Activated CD4-positive, alpha-beta memory T cell treated with anti-CD3 and anti-CD28 coated beads for 36 hours (primary cell): ENCODE measurements at regions of chr14 and their contacts with region 1.

Region 1: DNA sequence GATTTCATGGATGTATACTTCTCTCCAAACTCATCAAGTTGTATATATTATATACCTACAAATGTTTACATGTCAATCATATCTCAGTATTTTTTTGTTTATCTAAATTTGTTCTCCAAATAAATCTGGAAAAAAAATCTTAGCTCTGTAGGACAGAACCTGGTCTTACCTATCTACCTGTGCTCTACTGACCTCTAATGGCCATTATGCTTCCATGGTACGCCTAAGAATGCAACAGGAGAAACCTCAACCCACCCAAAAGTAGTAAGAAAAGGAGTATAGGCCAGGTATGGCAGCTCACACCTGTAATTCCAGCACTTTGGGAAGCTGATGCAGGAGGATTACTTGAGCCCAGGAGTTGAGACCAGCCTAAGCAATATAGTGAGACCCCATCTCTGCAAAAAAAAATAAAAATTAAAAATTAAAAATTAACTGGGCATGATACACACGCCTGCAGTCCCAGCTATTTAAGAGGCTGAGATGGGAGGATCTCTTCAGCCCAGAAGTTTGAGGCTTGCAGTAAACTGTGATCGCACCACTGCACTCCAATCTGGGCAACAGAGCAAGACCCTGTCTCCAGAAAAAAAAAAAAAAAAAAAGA is 8.7 kb downstream of the OR11H4 start:
- DNase-seq: no peak
- H3K4me3 Mint-ChIP-seq: no peak overlapping the region
- H3K27ac Mint-ChIP-seq: no peak overlapping the region
- H3K4me1 Mint-ChIP-seq: no peaks in the 10 kb centered on the region
- H3K27me3 Mint-ChIP-seq: no peaks in the 10 kb centered on the region

Region 2: DNA sequence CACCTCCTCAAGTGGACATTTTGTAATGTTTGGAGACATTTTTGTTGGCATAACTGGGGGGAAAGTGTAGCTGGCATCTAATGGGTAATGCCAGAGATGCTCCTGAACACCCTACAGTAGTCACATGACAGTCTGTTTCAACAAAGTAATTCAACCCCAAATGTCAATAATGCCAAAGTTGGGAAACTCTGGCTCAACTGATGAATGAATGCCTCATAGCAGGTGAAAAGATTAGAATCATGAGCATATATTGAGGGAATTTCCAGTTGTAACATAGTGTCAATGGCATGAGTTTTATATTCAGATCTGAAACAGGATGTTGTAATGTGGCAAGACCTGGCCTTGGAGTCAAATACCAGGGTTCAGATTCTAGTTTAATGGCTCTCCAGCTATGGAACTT is 329.7 kb before region 1 on chr14:
- CTCF ChIA-PET with region 1: no interaction called
- POLR2A ChIA-PET with region 1: no interaction called
- intact Hi-C with region 1: no loop called
- DNase-seq: no peak
- H3K4me3 Mint-ChIP-seq: no peak overlapping the region
- H3K27ac Mint-ChIP-seq: no peak overlapping the region
- H3K4me1 Mint-ChIP-seq: no peaks in the 10 kb centered on the region
- H3K27me3 Mint-ChIP-seq: no peaks in the 10 kb centered on the region

Region 3: DNA sequence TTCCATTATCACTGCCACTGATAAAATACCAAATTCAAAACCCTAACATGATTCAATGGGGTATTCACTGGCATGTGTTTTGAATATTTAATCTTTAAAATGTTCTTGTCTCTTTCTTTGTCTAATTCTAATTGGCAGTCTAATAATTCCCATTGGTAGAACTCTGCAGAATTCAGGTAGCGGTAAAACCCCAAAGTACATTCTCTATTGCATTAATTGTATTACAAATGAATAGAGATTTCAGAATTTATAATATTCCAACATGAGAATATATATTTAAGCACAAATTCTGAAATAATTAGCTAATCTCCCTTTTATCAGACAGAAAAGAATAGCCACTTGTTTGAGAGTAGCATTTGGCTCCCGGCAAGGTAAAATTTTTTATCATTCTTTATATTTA is 109.2 kb before region 1 on chr14 and contains the start of gene OR4N5:
- CTCF ChIA-PET with region 1: no interaction called
- POLR2A ChIA-PET with region 1: no interaction called
- intact Hi-C with region 1: loop called (anchors 10 kb)
- DNase-seq: no peak
- H3K4me3 Mint-ChIP-seq: no peak within 1 kb of the TSS
- H3K27ac Mint-ChIP-seq: no peak within 1 kb of the TSS
- H3K4me1 Mint-ChIP-seq: no peaks in the 10 kb centered on the region
- H3K27me3 Mint-ChIP-seq: peaks cover 3% of the 10 kb centered on the region
- total RNA-seq, gene OR4N5: not detected